ENCODE measurements at regions of chr3 and their contacts with region 1.

Region 1: DNA sequence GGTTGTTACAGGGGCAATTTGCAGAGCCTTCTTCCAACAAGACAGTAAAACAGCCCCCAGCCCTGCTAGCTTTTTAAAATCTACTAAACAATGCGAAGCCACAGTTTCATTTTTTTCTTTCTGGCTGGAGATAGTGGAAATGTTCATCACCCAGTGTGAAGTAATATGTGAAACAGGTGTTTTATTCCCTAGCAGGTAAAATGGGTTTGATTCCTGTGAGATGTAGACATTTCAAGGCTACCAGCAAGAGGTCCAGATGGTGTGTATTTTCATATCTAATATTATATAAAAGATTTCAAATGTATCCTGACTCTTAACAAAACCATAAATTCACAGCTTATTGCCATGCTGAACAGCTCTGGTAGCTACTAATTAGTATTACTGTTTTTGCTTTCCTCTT is 160.3 kb downstream of the SATB1 start:
- DNase-seq: no peak
- H3K4me3 ChIP-seq: no peak overlapping the region
- H3K27ac ChIP-seq: no peak overlapping the region
- H3K4me1 ChIP-seq: no peaks in the 10 kb centered on the region
- H3K27me3 ChIP-seq: no peaks in the 10 kb centered on the region
- CTCF ChIP-seq: no peak

Region 2: DNA sequence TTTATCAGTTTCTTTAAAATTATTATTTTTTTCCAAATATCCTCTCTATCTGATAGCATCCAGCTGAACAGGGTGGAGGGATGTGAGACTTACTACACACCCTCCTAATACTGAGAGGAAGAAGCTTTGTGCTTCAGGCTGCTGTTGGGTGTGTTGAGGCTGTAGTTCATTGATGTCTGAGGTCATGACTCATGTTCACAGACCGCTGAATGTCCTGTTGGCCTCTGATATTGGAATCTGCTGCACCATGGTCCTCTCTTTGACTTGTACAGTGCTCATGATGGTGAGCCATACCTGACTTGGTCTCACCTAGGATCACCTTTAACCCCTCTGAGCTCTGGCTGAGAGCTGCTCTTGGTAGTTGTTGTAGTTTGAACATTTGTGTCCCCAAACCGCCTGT is 142.6 kb before region 1 on chr3:
- CTCF ChIA-PET with region 1: no interaction called
- dilution Hi-C with region 1: no loop called
- in situ Hi-C with region 1: no loop called
- intact Hi-C with region 1: no loop called
- DNase-seq: peak; percentile 45
- H3K4me3 ChIP-seq: no peak overlapping the region
- H3K27ac ChIP-seq: no peak overlapping the region
- H3K4me1 ChIP-seq: peaks cover 23% of the 10 kb centered on the region
- H3K27me3 ChIP-seq: no peaks in the 10 kb centered on the region
- CTCF ChIP-seq: no peak

Region 3: DNA sequence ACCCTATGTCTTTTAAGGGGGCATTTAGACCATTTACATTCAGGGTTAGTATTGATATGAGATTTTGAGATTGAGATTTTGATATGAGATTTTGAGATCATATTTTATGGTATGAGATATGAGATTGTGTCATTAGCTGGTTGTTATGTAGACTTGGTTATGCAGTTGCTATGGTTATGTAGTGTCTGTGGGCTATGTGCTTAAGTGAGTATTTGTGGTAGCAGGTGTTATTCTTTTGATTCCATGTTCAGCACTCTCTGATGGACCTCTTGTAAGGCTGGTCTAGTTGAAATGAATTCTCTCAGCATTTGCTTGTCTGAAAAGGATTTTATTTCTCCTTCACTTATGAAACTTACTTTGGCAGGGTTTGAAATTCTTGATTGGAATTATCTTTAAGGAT is 65.1 kb before region 1 on chr3:
- CTCF ChIA-PET with region 1: no interaction called
- dilution Hi-C with region 1: loop called (anchors 5 kb)
- in situ Hi-C with region 1: no loop called
- intact Hi-C with region 1: no loop called
- DNase-seq: no peak
- H3K4me3 ChIP-seq: no peak overlapping the region
- H3K27ac ChIP-seq: no peak overlapping the region
- H3K4me1 ChIP-seq: no peaks in the 10 kb centered on the region
- H3K27me3 ChIP-seq: no peaks in the 10 kb centered on the region
- CTCF ChIP-seq: no peak

Region 4: GRCh38 chr3:18370672-18371071 is 105.8 kb after region 1 on chr3:
- CTCF ChIA-PET with region 1: no interaction called
- dilution Hi-C with region 1: no loop called
- in situ Hi-C with region 1: no loop called
- intact Hi-C with region 1: no loop called
- DNase-seq: no peak
- H3K4me3 ChIP-seq: no peak overlapping the region
- H3K27ac ChIP-seq: no peak overlapping the region
- H3K4me1 ChIP-seq: no peaks in the 10 kb centered on the region
- H3K27me3 ChIP-seq: no peaks in the 10 kb centered on the region
- CTCF ChIP-seq: no peak

Region 5: GRCh38 chr3:18732474-18732873 is 467.6 kb after region 1 on chr3:
- CTCF ChIA-PET with region 1: no interaction called
- dilution Hi-C with region 1: no loop called
- in situ Hi-C with region 1: no loop called
- intact Hi-C with region 1: no loop called
- DNase-seq: peak; percentile 1
- H3K4me3 ChIP-seq: no peak overlapping the region
- H3K27ac ChIP-seq: no peak overlapping the region
- H3K4me1 ChIP-seq: no peaks in the 10 kb centered on the region
- H3K27me3 ChIP-seq: no peaks in the 10 kb centered on the region
- CTCF ChIP-seq: no peak

Measured in mammary epithelial cell (primary cell).